HCT116 (cell line): ENCODE measurements at regions of chr1 and their contacts with region 1.

Region 1: DNA sequence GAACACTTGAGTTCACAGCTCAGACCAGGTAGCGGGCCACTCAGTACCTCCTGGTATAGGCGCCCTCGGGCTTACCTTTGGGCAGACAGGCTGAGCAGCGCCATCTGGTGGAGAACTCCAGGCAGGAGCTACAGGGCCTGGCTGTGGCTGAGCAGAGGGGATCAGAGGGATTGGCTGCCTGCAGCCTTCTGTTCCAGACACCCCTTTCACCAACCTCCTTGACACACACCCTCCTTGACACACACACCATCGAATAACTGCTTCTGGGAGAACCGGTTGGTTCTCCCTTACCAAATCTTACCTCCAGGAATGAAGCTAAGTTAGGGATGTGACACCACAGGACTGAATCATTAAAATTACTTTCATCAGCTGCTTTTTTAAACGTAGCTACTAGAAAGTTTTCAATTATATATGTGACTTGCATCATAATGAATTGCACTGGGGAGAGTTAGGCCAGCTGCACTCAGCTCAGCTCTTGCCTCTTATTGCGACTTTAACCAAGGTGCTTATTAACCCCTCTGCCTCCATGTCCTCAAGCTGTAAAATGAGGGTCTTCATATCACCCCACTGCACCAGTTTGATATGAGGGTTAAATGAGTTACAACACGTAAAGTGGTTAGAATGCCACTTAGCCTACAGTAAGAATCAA is 6.6 kb downstream of the LIN28A start:
- DNase-seq: peak; percentile 80
- ATAC-seq: peak; percentile 100
- H3K4me3 ChIP-seq: no peak overlapping the region
- H3K27ac ChIP-seq: no peak overlapping the region
- H3K4me1 ChIP-seq: peaks cover 0 to 19% of the 10 kb centered on the region in 2 experiments; a peak in 2 of 4 replicates
- H3K27me3 ChIP-seq: no peaks in the 10 kb centered on the region; the same call in 1 of the 2 replicates
- CTCF ChIP-seq: peak; percentile 76 to 95 (median 89)
- POLR2A ChIP-seq: no peak
- RAD21 ChIP-seq: peak; percentile 84

Region 2: GRCh38 chr1:26279456-26280332 is 137.5 kb before region 1 on chr1 and contains the start of gene SH3BGRL3:
- CTCF ChIA-PET with region 1: interaction called, 50 read pairs
- POLR2A ChIA-PET with region 1: no interaction called
- RAD21 ChIA-PET with region 1: interaction called, 4 read pairs
- intact Hi-C with region 1: loop called (anchors 2 kb)
- DNase-seq: peak; percentile 57
- ATAC-seq: peak; percentile 79
- H3K4me3 ChIP-seq: peak within 1 kb of the TSS; percentile 74 to 76
- H3K27ac ChIP-seq: peak within 1 kb of the TSS; percentile 81
- H3K4me1 ChIP-seq: peaks cover 41 to 95% of the 10 kb centered on the region in 2 experiments
- H3K27me3 ChIP-seq: no peaks in the 10 kb centered on the region
- CTCF ChIP-seq: peak in 2 of 3 experiments; percentile 70 to 77; a peak in 4 of 6 replicates
- POLR2A ChIP-seq: peak; percentile 68
- RAD21 ChIP-seq: no peak
- total RNA-seq, gene SH3BGRL3: 112 TPM

Region 3: DNA sequence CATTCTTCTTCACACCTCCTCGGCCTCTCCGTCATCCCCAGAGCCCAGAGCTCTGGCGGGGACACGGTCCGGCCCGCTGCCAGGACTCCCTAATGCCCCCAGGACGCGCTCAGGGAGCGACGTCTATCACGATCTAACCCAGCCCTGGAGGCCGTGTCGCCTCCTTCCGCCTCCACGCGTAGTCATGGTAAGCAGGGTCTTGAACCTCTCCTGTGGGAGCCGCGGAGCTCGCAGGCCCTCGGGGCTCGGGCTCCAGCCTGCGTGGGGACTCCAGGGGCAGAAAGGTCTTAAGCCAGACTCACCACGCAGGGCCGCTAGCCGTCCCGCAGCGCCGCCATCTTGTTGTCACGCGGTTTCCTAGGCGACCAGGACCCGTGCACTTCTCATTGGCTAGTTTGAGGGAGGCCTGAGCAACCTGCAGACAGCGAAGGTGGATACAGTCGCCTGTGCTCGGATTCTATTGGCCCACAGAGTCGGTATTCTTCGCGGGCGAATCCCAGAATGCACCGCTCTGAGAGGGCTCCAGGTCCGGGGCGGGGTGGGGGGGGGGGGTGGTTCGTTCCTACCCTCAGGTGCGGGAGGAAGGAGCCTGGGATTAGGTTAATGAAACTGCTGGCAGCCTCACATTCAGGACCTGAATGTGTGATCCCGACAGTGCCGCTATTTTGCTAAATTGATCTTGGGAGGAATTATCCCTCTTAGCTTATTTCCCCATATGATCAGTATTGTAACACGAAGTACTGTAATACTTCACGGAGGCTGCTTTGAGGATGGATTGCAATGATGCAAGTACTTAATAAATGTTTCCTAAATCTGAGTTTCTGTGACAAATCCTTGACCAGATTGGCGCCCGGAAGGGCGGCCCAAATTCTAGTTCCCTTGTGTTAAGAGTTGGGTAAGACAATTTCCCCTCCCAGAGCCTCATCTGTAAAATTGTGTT is 110.7 kb before region 1 on chr1 and contains the start of gene UBXN11:
- CTCF ChIA-PET with region 1: no interaction called
- POLR2A ChIA-PET with region 1: no interaction called
- RAD21 ChIA-PET with region 1: no interaction called
- intact Hi-C with region 1: no loop called
- DNase-seq: peak; percentile 94
- ATAC-seq: peak; percentile 99
- H3K4me3 ChIP-seq: peak within 1 kb of the TSS; percentile 79 to 91
- H3K27ac ChIP-seq: peak within 1 kb of the TSS; percentile 28
- H3K4me1 ChIP-seq: peaks cover 9 to 38% of the 10 kb centered on the region in 2 experiments; a peak in 3 of 4 replicates
- H3K27me3 ChIP-seq: no peaks in the 10 kb centered on the region
- CTCF ChIP-seq: no peak
- POLR2A ChIP-seq: peak; percentile 66
- RAD21 ChIP-seq: no peak
- total RNA-seq, gene UBXN11: 19.3 TPM

Region 4: DNA sequence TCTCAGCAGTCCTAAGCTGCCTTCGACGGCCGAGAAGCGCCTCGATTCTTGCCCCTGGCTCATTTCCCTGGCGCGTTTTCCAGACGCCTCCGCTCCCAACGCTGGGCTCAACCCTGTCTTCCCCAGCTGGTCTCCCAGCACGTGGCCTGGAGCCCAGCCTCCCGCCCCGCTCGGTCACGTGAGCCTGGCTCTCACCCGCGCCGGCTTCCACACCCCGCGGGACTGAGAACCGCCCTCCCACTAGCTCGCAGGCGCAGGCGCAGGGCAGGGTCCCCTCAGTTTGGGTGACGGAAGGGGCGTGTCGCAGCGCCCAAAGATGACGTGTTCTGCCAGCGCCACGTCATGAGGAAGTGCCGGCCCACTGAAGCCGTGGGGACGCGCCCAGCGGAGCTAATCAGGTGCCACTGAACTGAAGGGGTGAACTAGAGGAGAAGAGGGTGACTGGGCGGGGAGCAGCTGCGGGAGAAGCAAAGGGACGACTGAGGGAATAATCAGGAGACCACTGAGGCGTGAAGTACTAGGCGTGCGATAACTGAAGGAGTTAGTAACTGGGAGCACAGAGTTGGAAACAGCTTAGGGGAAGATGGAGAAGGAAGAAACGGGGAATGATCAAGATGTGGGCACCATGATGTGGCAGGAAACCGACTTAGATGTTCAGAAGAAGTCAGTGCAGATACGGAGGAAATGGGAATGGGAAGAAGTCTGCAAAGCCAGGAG is 14.9 kb after region 1 on chr1 and contains the start of gene DHDDS:
- CTCF ChIA-PET with region 1: interaction called, 18 read pairs
- POLR2A ChIA-PET with region 1: interaction called, 5 read pairs
- RAD21 ChIA-PET with region 1: no interaction called
- intact Hi-C with region 1: no loop called
- DNase-seq: peak; percentile 93
- ATAC-seq: peak; percentile 97
- H3K4me3 ChIP-seq: peak within 1 kb of the TSS; percentile 91 to 99
- H3K27ac ChIP-seq: peak within 1 kb of the TSS; percentile 51
- H3K4me1 ChIP-seq: peaks cover 13 to 16% of the 10 kb centered on the region in 2 experiments; a peak in 3 of 4 replicates
- H3K27me3 ChIP-seq: no peaks in the 10 kb centered on the region
- CTCF ChIP-seq: no peak
- POLR2A ChIP-seq: peak; percentile 53
- RAD21 ChIP-seq: no peak
- total RNA-seq, gene DHDDS: 46.0 TPM

Region 5: GRCh38 chr1:26790551-26790953 is 373.3 kb after region 1 on chr1:
- CTCF ChIA-PET with region 1: no interaction called
- POLR2A ChIA-PET with region 1: no interaction called
- RAD21 ChIA-PET with region 1: no interaction called
- intact Hi-C with region 1: no loop called
- DNase-seq: no peak
- ATAC-seq: no peak
- H3K4me3 ChIP-seq: no peak overlapping the region
- H3K27ac ChIP-seq: no peak overlapping the region
- H3K4me1 ChIP-seq: peaks cover 13 to 35% of the 10 kb centered on the region in 2 experiments
- H3K27me3 ChIP-seq: no peaks in the 10 kb centered on the region
- CTCF ChIP-seq: no peak
- POLR2A ChIP-seq: no peak
- RAD21 ChIP-seq: no peak